GM12878 (cell line): ENCODE measurements at regions of chr10 and their contacts with region 1.

Region 1: DNA sequence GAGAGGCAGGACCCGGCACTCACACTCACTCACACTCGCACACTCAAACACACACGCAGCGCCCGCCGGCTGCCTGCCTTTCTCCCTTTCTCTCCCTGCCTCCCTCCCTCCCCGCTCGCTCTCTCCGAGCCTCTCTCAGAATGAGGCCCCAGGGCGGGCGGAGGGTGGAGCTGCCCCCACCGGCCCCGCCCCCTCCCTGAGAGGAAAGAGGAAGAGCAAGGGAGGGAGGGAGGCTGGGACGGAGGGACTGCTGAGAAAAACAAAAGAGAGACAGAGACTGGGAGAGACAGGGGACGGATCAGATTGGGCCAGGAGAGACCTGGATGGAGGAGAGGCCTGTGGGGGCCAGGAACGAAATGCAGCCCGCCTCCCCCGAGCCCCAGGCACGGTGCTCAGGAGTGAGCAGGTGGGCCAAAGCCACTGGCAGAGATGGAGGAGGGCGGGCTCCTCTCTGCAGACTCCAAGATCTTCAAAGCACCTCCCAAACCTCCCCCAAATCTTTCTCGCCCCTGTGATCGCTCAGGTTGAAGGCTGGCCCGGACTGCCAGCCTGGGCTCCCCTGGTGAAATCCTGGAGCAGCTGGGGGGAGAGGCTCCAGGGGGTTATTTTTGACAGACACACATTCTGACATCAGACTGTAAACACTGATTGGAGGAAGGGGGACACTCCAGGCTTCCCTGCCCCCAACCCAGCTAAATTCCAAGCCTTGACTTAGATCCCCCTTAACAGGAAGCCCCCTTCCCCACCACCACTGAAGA is 5.1 kb downstream of the LDB1 start:
- DNase-seq: no peak
- ATAC-seq: peak; percentile 82
- H3K4me3 ChIP-seq: peak overlapping the region; percentile 82
- H3K27ac ChIP-seq: peak overlapping the region; percentile 84
- H3K4me1 ChIP-seq: peaks cover 43% of the 10 kb centered on the region
- H3K27me3 ChIP-seq: no peaks in the 10 kb centered on the region
- CTCF ChIP-seq: no peak
- EP300 ChIP-seq: no peak
- POLR2A ChIP-seq: peak; percentile 92
- RAD21 ChIP-seq: no peak

Region 2: DNA sequence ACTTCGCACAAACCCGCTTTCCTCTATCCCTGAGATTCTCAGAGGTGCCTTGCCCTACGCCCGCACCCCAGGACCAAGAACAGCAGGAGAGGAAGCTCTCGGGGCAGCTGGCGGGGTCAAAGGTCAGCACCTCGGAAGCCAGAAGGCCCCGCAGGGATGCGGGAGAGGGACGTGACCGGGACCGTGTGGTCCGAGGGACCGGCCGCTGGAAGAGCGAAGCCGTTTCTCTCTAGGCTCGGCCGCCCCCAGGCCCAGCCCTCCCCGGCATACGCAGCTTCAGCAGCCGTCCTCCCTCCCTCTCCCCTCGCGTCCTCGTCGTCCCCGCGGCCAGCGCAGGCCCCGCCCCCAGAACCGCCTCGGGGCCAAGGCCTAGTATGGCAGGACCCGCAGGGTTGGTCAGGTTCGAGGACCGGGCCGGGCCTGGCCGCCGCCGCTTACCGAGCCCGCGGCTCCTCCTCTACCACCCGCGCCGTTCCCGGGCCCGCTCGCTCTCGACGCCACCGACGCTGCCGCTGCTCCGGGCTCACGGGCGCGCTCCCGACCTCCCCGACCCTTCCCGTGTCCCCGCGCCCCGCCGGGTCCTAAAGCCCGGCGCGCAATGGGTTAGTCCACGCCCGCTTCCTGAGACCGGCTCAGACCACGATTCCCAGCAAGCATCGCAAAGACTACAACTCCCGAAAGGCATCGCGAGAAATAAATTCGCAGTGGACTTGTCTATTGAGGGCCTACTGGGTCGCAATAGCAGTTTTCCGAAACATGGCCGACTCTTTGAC is 59.2 kb before region 1 on chr10 and contains the start of gene ARMH3:
- CTCF ChIA-PET with region 1: no interaction called
- POLR2A ChIA-PET with region 1: interaction called, 4 read pairs
- RAD21 ChIA-PET with region 1: interaction called, 3 read pairs
- SMC1A ChIA-PET with region 1: no interaction called
- in situ Hi-C with region 1: no loop called
- intact Hi-C with region 1: loop called (anchors 2 kb)
- DNase-seq: peak; percentile 87
- ATAC-seq: peak; percentile 98
- H3K4me3 ChIP-seq: peak within 1 kb of the TSS; percentile 93
- H3K27ac ChIP-seq: peak within 1 kb of the TSS; percentile 77
- H3K4me1 ChIP-seq: 0 out of 2 replicates have a peak, but pooled peaks cover 9% of the 10 kb centered on the region
- H3K27me3 ChIP-seq: no peaks in the 10 kb centered on the region
- CTCF ChIP-seq: no peak
- EP300 ChIP-seq: no peak
- POLR2A ChIP-seq: peak; percentile 83
- RAD21 ChIP-seq: no peak
- polyA plus RNA-seq, gene ARMH3: 13.6 to 14.0 TPM

Region 3: GRCh38 chr10:102151774-102152544 is 36.9 kb after region 1 on chr10 and contains the start of gene NOLC1:
- CTCF ChIA-PET with region 1: no interaction called
- POLR2A ChIA-PET with region 1: interaction called, 10 read pairs
- RAD21 ChIA-PET with region 1: interaction called, 8 read pairs
- SMC1A ChIA-PET with region 1: interaction called, 5 read pairs
- in situ Hi-C with region 1: no loop called
- intact Hi-C with region 1: no loop called
- DNase-seq: peak; percentile 98
- ATAC-seq: peak; percentile 96
- H3K4me3 ChIP-seq: peak within 1 kb of the TSS; percentile 94
- H3K27ac ChIP-seq: peak within 1 kb of the TSS; percentile 83
- H3K4me1 ChIP-seq: peaks cover 9% of the 10 kb centered on the region
- H3K27me3 ChIP-seq: no peaks in the 10 kb centered on the region
- CTCF ChIP-seq: no peak
- EP300 ChIP-seq: peak; percentile 48 to 57; a peak in 1 of 4 replicates
- POLR2A ChIP-seq: peak; percentile 99
- RAD21 ChIP-seq: no peak
- polyA plus RNA-seq, gene NOLC1: 91.7 to 103 TPM